CD8-positive, alpha-beta memory T cell (primary cell): ENCODE measurements at regions of chr2 and their contacts with region 1.

Region 1: DNA sequence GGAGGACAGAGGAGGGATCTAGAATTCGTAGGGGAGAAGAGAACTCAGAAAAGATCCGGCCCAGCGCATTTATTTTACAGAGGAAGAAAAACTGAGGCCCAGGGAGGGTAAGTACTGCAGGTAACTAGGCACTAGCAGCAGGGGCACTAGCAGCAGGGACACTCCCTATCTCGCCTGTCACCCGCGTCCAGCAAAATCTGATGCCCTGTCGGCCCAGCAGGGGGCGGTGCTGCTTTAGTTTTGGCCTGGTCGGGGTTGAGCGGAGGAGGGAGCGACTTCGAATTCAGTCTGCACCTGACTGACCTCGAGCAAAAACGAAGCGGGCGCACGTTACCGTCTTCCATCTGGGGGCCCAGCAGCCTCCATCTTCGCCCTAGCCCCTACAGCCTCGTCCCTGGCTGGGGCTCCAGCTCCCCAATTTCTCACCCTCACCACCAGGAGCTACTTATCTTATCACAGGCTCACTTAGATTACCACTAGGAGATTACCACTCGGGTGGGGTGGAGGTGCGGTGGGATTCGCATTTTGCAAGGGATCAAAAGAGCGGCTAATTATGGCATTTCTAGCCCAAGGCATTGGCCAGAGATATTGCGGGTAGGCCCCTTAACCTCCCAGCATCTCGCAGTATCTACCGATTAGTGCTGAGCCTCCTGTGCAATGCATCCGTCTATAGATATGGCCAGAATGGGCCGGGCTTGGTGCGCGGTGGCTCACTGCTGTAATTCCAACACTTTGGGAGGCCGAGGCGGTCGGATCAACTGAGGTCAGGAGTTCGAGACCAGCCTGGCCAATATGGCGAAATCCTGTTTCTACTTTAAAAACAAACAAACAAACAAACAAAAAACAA is 17.8 kb upstream of the CD8A start:
- DNase-seq: peak; percentile 92 to 99 (median 95)
- H3K4me3 ChIP-seq: peak overlapping the region; percentile 71
- H3K4me3 Mint-ChIP-seq: peak overlapping the region; percentile 85 to 99 (median 92)
- H3K27ac ChIP-seq: peak overlapping the region; percentile 78
- H3K27ac Mint-ChIP-seq: peak overlapping the region; percentile 91 to 100 (median 98)
- H3K4me1 ChIP-seq: peaks cover 38% of the 10 kb centered on the region
- H3K4me1 Mint-ChIP-seq: peaks cover 72 to 84% (median 75%) of the 10 kb centered on the region in 3 donors
- H3K27me3 ChIP-seq: no peaks in the 10 kb centered on the region
- H3K27me3 Mint-ChIP-seq: no peaks in the 10 kb centered on the region

Region 2: GRCh38 chr2:86440631-86441391 is 367.7 kb before region 1 on chr2 and contains the start of gene KDM3A:
- CTCF ChIA-PET with region 1: interaction called, 11 read pairs
- POLR2A ChIA-PET with region 1: interaction called, 3 read pairs
- DNase-seq: peak; percentile 99 to 100 (median 99)
- H3K4me3 ChIP-seq: peak within 1 kb of the TSS; percentile 87
- H3K4me3 Mint-ChIP-seq: peak within 1 kb of the TSS; percentile 93 to 98 (median 96)
- H3K27ac ChIP-seq: peak within 1 kb of the TSS; percentile 96
- H3K27ac Mint-ChIP-seq: peak within 1 kb of the TSS; percentile 95 to 100 (median 98)
- H3K4me1 ChIP-seq: peaks cover 34% of the 10 kb centered on the region
- H3K4me1 Mint-ChIP-seq: peaks cover 43 to 47% (median 46%) of the 10 kb centered on the region in 3 donors
- H3K27me3 ChIP-seq: no peaks in the 10 kb centered on the region
- H3K27me3 Mint-ChIP-seq: peaks cover 0 to 16% of the 10 kb centered on the region in 2 donors
- total RNA-seq, gene KDM3A: 45.8 to 46.2 TPM

Region 3: DNA sequence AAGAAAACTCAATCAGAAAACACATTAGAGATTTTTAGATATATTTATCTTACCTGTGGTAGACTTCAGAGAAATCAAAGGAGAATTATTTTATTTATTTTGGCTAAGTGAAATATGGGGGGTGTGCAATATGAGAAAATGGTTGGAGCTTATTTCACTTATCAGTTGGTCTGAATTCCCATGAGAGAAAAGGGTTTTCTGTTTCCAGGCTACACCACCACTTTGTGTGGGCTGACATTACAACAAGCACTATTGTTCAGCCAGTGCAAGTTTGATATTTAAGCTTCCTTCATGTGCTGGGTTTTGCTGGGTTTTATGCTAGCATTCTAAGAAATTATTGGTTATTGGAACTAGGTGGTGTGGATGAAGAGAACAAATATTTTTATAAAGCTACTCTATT is 54.9 kb before region 1 on chr2:
- CTCF ChIA-PET with region 1: interaction called, 12 read pairs
- POLR2A ChIA-PET with region 1: no interaction called
- DNase-seq: no peak
- H3K4me3 ChIP-seq: no peak overlapping the region
- H3K4me3 Mint-ChIP-seq: no peak overlapping the region
- H3K27ac ChIP-seq: no peak overlapping the region
- H3K27ac Mint-ChIP-seq: peak overlapping the region in 2 of 8 donors; percentile 4 to 77
- H3K4me1 ChIP-seq: no peaks in the 10 kb centered on the region
- H3K4me1 Mint-ChIP-seq: peaks cover 32 to 59% (median 33%) of the 10 kb centered on the region in 3 donors
- H3K27me3 ChIP-seq: no peaks in the 10 kb centered on the region
- H3K27me3 Mint-ChIP-seq: no peaks in the 10 kb centered on the region

Region 4: DNA sequence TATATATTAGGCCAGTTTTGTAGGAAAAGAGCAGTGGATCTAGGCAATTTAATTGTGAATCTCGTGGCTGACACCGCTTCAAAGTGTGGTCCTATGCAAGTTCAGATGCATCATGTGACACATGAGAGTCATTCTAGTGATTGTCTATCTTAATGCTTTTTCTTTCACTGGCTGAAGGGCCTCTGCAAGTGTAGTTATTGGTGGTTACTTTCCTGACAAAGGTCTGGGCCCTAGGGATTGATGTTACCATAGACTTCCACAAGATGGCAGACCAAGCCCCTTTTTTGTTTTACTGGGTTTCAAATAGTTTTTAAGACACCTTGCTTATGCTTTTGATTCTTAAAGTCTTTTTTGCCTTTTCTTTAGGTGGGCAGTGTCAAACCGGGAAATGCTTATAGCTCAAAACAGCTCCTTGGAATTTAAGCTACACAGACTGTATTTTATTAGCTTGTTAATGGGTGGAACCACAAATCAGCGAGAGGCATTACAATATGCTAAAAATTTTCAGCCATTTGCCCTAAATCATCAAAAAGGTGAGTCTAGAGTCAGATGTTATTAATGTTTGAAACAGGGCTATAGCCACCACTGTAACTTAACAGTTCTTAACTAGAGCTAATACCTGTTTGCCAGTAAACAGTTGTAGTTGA is 43.8 kb before region 1 on chr2:
- CTCF ChIA-PET with region 1: interaction called, 128 read pairs
- POLR2A ChIA-PET with region 1: interaction called, 7 read pairs
- DNase-seq: peak in 4 of 5 donors; percentile 32 to 71 (median 56)
- H3K4me3 ChIP-seq: no peak overlapping the region
- H3K4me3 Mint-ChIP-seq: no peak overlapping the region
- H3K27ac ChIP-seq: no peak overlapping the region
- H3K27ac Mint-ChIP-seq: peak overlapping the region; percentile 39 to 94 (median 90)
- H3K4me1 ChIP-seq: peaks cover 5% of the 10 kb centered on the region
- H3K4me1 Mint-ChIP-seq: peaks cover 21 to 45% (median 41%) of the 10 kb centered on the region in 3 donors
- H3K27me3 ChIP-seq: no peaks in the 10 kb centered on the region
- H3K27me3 Mint-ChIP-seq: no peaks in the 10 kb centered on the region

Region 5: DNA sequence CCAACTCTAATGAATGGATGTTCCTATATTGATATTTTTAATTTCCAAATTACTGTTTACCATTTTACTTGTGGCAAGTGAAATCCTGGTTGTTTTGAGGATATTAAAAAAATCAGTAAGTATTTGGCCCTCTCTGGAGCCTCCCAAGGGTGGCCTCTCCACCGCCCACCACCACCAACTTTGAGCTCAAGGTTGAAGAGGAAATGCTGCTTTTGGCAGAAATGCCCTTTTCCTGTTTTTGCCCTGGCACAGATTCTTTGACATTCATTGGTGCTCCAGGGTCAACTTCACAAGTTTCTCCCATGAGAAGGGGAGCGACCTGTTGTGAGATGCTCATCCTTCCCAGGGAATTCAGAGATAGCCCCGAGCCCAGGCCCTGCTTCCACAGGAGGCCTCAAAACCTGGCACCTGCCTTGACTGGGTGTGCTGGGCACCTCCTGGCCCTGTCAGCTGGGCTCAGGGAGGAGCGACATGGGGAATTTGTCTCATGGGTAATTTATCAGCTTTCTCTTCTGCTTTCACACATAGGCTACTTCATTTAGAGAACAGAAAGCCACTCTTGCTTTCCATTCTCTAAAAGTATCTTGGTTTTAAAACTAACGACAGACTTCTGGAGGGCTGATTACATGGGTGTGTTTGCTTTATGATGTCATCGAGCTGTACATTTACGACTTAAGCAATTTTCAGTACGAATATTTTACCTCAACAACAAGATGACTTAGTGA is 24.8 kb before region 1 on chr2:
- CTCF ChIA-PET with region 1: interaction called, 132 read pairs
- POLR2A ChIA-PET with region 1: interaction called, 139 read pairs
- DNase-seq: peak in 2 of 5 donors; percentile 35 to 73
- H3K4me3 ChIP-seq: no peak overlapping the region
- H3K4me3 Mint-ChIP-seq: peak overlapping the region; percentile 3 to 96 (median 46)
- H3K27ac ChIP-seq: peak overlapping the region; percentile 29
- H3K27ac Mint-ChIP-seq: peak overlapping the region; percentile 94 to 100 (median 100)
- H3K4me1 ChIP-seq: peaks cover 43% of the 10 kb centered on the region
- H3K4me1 Mint-ChIP-seq: peaks cover 66 to 79% (median 77%) of the 10 kb centered on the region in 3 donors
- H3K27me3 ChIP-seq: no peaks in the 10 kb centered on the region
- H3K27me3 Mint-ChIP-seq: peaks cover 0 to 14% of the 10 kb centered on the region in 2 donors

Region 6: GRCh38 chr2:86790676-86791572 is 17.6 kb before region 1 on chr2 and contains the start of gene CD8A:
- CTCF ChIA-PET with region 1: interaction called, 132 read pairs
- POLR2A ChIA-PET with region 1: interaction called, 139 read pairs
- DNase-seq: peak; percentile 78 to 92 (median 85)
- H3K4me3 ChIP-seq: peak within 1 kb of the TSS; percentile 71
- H3K4me3 Mint-ChIP-seq: peak within 1 kb of the TSS; percentile 89 to 98 (median 95)
- H3K27ac ChIP-seq: peak within 1 kb of the TSS; percentile 95
- H3K27ac Mint-ChIP-seq: peak within 1 kb of the TSS; percentile 98 to 100 (median 100)
- H3K4me1 ChIP-seq: peaks cover 64% of the 10 kb centered on the region
- H3K4me1 Mint-ChIP-seq: peaks cover 75 to 80% (median 77%) of the 10 kb centered on the region in 3 donors
- H3K27me3 ChIP-seq: peaks cover 3% of the 10 kb centered on the region
- H3K27me3 Mint-ChIP-seq: peaks cover 0 to 11% of the 10 kb centered on the region in 2 donors
- total RNA-seq, gene CD8A: 359 to 363 TPM

Region 7: GRCh38 chr2:86825693-86826381 is 17.3 kb after region 1 on chr2:
- CTCF ChIA-PET with region 1: interaction called, 96 read pairs
- POLR2A ChIA-PET with region 1: interaction called, 81 read pairs
- DNase-seq: peak; percentile 65 to 96 (median 93)
- H3K4me3 ChIP-seq: peak overlapping the region; percentile 91
- H3K4me3 Mint-ChIP-seq: peak overlapping the region; percentile 83 to 97 (median 86)
- H3K27ac ChIP-seq: peak overlapping the region; percentile 84
- H3K27ac Mint-ChIP-seq: peak overlapping the region; percentile 89 to 99 (median 94)
- H3K4me1 ChIP-seq: peaks cover 45% of the 10 kb centered on the region
- H3K4me1 Mint-ChIP-seq: peaks cover 78 to 84% (median 80%) of the 10 kb centered on the region in 3 donors
- H3K27me3 ChIP-seq: no peaks in the 10 kb centered on the region
- H3K27me3 Mint-ChIP-seq: no peaks in the 10 kb centered on the region